ENCODE measurements at regions of chr6 and their contacts with region 1.

Region 1: GRCh38 chr6:36615018-36615761 is 21.0 kb downstream of the SRSF3 start:
- DNase-seq: peak; percentile 39
- H3K4me3 ChIP-seq: no peak overlapping the region
- H3K27ac ChIP-seq: peak overlapping the region; percentile 11
- H3K27me3 ChIP-seq: no peaks in the 10 kb centered on the region
- CTCF ChIP-seq: peak; percentile 84

Region 2: GRCh38 chr6:36576561-36576960 is 38.6 kb before region 1 on chr6:
- CTCF ChIA-PET with region 1: no interaction called
- POLR2A ChIA-PET with region 1: no interaction called
- DNase-seq: no peak
- H3K4me3 ChIP-seq: no peak overlapping the region
- H3K27ac ChIP-seq: no peak overlapping the region
- H3K27me3 ChIP-seq: no peaks in the 10 kb centered on the region
- CTCF ChIP-seq: no peak

Region 3: DNA sequence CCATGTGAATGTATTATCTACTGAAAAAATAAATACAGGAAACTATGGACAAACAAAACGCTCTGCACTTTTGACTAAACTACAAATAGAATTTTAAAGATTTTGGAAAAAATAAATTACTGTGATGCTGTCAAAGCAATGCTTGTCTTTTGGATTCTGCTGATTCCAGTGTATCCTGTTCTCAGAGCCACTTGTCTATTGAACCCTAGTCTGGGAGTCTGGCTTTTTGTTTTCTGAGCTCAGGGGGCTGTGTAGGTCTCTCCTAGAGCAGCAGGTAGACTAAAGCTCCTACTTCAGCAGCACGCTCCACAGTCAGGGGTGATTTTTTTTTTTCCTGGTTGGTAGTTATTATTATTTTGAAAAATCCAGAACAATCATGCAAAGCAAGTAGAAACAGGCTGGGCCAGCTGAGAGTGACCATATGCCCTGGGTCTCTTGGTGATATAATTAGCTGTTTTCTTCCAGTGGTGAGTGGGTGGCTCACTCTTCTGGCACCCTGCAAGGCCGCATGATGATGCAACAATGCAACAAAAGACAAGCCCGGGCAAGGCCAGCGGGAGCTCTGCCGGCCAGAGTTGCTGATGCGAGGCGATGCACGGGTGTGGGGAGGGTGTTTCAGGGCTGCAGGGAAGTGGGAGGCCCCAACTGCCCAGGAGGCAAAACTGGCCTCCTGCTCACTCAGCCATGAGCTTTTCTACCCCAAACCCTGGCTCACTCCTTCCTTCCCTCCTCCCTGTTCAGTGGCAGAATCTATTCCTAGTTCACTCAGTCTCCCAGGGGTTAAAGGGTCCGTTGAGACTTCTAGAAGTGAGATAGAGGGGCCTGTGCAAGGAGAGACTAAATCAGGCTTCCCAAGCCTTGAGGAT is 51.8 kb after region 1 on chr6:
- CTCF ChIA-PET with region 1: interaction called, 5 read pairs
- POLR2A ChIA-PET with region 1: interaction called, 10 read pairs
- DNase-seq: peak; percentile 89
- H3K4me3 ChIP-seq: 0 out of 2 replicates have a peak overlapping the region, but pooled peaks have one; percentile 13
- H3K27ac ChIP-seq: peak overlapping the region; percentile 97
- H3K27me3 ChIP-seq: no peaks in the 10 kb centered on the region
- CTCF ChIP-seq: no peak

Region 4: GRCh38 chr6:36685936-36686667 is 70.9 kb after region 1 on chr6:
- CTCF ChIA-PET with region 1: interaction called, 36 read pairs
- POLR2A ChIA-PET with region 1: interaction called, 11 read pairs
- DNase-seq: no peak
- H3K4me3 ChIP-seq: no peak overlapping the region
- H3K27ac ChIP-seq: peak overlapping the region; percentile 70
- H3K27me3 ChIP-seq: no peaks in the 10 kb centered on the region
- CTCF ChIP-seq: no peak

Region 5: DNA sequence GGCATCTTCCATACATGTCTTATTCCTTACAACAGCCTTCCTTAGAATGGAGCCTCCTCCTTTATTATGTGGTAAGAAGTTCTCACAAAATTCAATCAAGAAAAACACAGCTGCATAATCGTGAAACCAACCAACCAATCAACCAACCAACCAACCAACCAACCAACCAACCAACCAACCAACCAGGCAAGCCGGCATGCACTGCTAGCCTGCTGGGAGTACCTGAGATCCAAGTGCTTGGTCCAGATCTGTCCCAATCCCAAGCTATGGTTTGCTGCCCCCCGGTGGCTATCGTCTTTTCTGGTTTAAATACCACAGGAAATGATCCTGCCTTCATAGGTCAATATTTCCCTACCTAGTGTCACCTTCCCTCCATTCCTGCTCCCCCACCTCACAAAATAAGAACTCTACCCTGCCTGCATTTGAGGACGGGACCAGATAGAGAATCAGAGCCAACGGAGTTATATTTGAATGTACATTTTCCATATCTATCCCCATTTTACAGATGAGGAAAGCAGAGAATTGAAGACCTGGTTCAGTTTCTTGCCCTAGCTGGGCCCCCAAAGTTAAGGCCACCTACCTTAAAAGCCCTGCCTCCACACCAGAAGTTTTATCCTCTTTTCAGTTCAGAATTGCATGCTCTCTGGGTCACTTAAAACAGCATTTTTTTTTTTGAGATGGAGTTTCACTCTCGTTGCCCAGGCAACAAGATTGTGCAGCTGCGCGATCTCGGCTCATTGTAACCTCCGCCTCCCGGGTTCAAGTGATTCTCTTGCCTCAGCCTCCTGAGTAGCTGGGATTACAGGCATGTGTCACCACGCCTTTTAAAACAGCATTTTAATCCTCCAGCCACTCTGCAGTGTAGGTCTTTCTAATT is 109.6 kb after region 1 on chr6:
- CTCF ChIA-PET with region 1: interaction called, 70 read pairs
- POLR2A ChIA-PET with region 1: no interaction called
- DNase-seq: peak; percentile 23
- H3K4me3 ChIP-seq: no peak overlapping the region
- H3K27ac ChIP-seq: no peak overlapping the region
- H3K27me3 ChIP-seq: peaks cover 5% of the 10 kb centered on the region
- CTCF ChIP-seq: peak; percentile 75

Region 6: GRCh38 chr6:36752886-36753506 is 137.8 kb after region 1 on chr6:
- CTCF ChIA-PET with region 1: interaction called, 76 read pairs
- POLR2A ChIA-PET with region 1: interaction called, 5 read pairs
- DNase-seq: no peak
- H3K4me3 ChIP-seq: no peak overlapping the region
- H3K27ac ChIP-seq: no peak overlapping the region
- H3K27me3 ChIP-seq: peaks cover 15% of the 10 kb centered on the region
- CTCF ChIP-seq: no peak

Measured in AG04450 (cell line).